ENCODE measurements at regions of chr9 and their contacts with region 1.

Region 1: DNA sequence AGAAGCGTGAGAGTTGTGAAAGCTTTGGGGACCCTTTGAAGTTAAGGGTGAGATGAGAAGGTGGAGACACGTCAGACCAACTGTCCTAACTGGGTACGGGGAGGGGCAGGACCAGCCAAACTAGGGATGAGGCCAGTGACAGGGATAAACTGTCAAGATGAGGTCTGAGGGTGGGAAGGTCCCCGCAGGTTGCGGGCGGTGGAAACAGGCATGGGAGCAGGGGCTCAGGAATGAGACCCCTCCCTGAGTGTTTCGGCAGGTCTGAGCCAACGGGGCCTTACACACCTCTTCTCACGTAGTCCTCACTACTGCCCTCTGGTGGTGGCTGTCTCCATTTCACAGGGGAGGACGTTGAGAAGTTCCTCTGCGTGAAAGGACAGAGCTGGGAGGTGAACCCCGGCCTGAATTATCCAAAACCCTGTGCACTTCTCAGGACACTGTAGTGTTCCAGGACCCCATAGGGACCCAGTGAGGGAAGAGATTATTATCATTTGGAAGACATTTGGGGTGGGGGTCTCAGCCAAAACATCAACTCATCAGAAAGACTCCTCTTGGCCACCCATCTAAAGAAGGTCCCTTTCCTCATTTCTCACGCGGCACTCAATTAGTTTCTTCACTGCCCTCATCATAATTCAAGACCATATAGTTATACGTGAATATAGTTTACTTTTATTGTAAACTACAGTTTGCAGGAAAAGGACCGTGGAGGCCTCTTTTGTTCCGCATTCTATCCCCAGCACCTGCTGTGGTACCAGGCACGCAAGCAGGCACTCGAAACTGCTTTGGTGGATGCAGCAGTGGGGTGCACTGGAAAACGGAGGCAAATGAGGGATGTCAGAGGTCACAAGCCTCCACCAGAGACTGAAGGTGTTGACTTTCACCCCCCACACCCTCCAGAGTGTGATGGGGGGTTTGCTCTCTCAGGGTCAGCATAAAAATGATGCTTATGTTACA is 21.7 kb upstream of the NANS start:
- DNase-seq: peak; percentile 94
- ATAC-seq: peak; percentile 97
- H3K4me3 Mint-ChIP-seq: peak overlapping the region; percentile 29
- H3K27ac Mint-ChIP-seq: no peak overlapping the region
- H3K4me1 Mint-ChIP-seq: peaks cover 14% of the 10 kb centered on the region
- H3K27me3 Mint-ChIP-seq: peaks cover 6% of the 10 kb centered on the region

Region 2: DNA sequence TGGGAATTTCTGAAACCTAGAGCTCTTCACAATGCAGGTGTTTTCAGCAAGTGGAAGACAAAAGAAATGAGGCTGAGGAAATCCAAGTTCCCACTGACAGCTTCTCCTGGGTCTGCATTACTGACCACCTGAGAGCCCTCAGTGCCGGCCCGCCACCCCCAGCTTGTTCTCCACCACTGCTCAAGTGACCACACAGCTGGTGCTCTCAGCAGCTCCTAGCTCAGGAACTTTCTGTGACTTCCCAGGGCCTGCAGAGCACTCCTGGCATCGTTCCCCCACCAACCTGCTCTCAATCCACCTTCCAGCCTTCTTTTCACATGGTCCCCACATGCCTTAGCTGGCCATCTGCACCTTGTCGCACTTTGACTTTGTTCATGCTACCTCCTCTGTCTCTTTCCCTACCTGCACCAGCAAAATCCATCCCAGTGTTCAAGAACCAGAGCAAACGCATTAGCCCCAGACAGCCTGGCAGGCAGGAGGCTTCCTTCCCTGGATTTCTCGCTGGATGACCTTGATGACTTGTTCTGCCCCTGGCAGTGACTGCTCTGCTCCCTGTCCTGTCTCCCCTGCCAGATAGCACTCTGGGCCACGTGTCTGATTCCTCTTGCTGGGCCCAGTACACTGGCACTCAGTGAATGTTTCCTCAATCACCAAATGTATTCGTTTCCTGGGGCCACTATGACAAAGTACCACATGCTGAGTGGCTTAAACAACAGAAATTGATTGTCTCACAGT is 13.4 kb before region 1 on chr9:
- CTCF ChIA-PET with region 1: interaction called, 20 read pairs
- DNase-seq: peak; percentile 39
- ATAC-seq: no peak
- H3K4me3 Mint-ChIP-seq: no peak overlapping the region
- H3K27ac Mint-ChIP-seq: no peak overlapping the region
- H3K4me1 Mint-ChIP-seq: no peaks in the 10 kb centered on the region
- H3K27me3 Mint-ChIP-seq: no peaks in the 10 kb centered on the region

Region 3: DNA sequence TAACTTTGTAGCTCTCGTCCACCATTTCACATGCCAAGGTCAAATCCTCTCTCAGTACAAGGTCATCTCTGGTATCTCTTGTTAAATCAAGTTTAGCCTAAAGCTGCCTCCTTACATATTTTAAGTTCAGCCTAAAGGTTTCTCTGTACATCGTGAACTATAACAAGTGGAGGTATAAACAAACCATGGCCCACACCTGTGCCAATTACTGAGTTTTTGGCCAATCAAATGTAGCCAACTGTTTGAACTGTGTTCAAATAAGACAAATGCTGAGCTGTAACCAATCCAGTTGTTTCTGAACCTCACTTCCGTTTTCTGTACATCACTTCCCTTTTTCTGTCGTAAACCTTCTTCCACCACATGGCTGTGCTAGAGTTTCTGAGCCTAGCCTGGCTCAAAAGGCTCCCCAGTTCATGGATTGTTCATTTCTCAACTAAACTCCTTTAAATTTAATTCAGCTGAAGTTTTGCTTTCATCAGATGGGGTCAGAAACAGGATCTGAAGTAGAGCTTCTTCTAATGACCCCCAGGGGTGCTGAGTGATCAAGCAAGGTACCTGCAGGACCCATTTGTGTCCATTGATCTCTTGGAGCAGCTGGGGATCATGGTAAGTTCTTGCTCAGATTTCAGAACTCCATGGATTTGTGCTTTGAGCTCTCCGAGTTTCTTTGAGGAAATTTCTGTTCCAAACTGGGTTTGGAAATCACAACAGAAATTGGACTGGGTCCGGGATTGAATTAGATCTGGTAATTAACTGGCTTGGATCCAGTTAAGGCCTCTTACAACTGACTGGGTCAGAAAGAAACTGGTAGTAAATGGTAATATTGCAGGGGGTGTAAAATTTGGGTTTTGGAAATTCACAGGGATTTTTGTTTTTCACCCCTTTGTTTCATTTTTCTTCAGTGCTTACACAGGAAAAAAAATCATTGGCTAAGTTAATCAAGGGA is 10.6 kb after region 1 on chr9:
- CTCF ChIA-PET with region 1: interaction called, 25 read pairs
- DNase-seq: peak; percentile 61
- ATAC-seq: peak; percentile 96
- H3K4me3 Mint-ChIP-seq: peak overlapping the region; percentile 83
- H3K27ac Mint-ChIP-seq: peak overlapping the region; percentile 83
- H3K4me1 Mint-ChIP-seq: peaks cover 39% of the 10 kb centered on the region
- H3K27me3 Mint-ChIP-seq: no peaks in the 10 kb centered on the region

Region 4: GRCh38 chr9:98056269-98057137 is 21.6 kb after region 1 on chr9 and contains the start of gene NANS:
- CTCF ChIA-PET with region 1: interaction called, 16 read pairs
- DNase-seq: peak; percentile 96
- ATAC-seq: peak; percentile 96
- H3K4me3 Mint-ChIP-seq: peak within 1 kb of the TSS; percentile 92
- H3K27ac Mint-ChIP-seq: peak within 1 kb of the TSS; percentile 95
- H3K4me1 Mint-ChIP-seq: peaks cover 43% of the 10 kb centered on the region
- H3K27me3 Mint-ChIP-seq: no peaks in the 10 kb centered on the region
- total RNA-seq, gene NANS: 35.5 to 47.8 TPM

Region 5: DNA sequence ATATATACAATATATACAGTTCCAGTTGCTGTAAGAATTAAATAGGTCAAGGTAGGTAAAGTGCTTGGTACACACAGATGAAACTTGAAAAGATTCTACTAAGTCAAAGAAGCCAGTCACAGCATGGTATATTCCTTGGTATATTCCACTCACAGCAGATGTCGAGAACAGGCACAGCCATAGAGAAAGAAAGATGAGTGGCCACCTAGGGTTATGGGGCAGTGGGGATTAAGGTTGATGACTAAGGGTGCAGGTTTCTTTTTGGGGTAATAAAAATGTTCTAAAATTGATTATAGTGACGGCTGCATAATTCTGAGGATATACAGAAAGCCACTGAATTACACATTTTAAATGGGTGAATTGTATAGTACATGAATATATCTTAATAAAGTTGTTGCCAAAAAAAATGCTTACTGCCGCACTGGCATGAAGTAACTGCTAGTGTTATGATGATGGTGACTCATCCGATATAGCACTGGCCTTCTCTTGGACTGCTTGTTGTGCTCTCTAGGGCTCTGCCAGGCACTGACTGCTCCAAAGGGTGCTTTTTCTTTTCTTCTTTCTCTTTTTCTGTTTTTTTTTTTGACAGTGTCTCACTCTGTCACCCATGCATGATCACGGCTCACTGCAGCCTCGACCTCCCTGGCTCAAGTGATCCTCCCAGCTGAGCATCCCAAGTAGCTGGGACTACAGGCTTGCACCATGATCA is 197.1 kb after region 1 on chr9:
- CTCF ChIA-PET with region 1: no interaction called
- DNase-seq: no peak
- ATAC-seq: no peak
- H3K4me3 Mint-ChIP-seq: no peak overlapping the region
- H3K27ac Mint-ChIP-seq: no peak overlapping the region
- H3K4me1 Mint-ChIP-seq: no peaks in the 10 kb centered on the region
- H3K27me3 Mint-ChIP-seq: no peaks in the 10 kb centered on the region